ENCODE measurements at regions of chr9 and their contacts with region 1.

Region 1: GRCh38 chr9:68999393-69000105 is 14.4 kb downstream of the PRKACG start:
- DNase-seq: peak; percentile 76
- CTCF ChIP-seq: peak; percentile 73

Region 2: DNA sequence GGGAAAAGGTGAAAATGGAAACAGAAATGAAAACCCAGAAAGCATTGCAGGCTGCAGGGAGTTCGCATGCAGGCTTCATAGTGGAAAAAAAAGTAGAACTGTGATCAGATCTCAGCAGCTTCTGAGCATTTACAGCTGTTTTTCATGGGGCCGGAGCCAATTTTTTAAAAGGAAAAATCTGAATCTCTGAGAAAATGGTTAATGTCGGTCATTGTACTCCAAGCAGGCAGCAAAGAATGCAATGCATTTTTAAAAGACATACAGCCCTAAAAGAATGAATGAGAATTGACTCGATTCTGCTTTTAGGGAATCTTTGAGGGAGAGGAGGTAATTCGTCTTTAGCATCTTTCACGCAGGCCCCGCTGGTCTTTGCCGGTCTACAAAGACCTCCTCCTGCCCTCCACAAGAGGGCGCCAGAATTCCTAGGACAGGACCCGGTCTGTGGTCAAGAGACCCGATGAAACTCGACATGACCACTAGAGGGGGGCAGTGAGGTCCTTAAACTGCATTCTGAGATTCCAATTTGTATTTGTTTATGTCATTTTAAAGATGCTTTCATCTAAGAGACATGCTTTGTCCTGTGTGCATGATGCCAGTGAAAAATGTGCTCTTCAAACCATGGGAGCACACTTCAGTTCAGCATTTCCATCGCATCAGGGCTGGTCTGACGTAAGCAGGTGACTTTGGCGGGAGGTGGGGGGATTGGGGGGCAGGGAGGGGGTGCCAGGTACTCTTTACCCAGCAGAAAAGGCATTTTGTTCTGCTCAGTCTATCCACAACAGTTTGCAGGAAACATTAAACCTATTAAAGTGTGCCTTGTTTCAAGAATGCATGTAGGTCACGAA is 415.1 kb before region 1 on chr9:
- CTCF ChIA-PET with region 1: interaction called, 21 read pairs
- POLR2A ChIA-PET with region 1: no interaction called
- DNase-seq: peak; percentile 86
- CTCF ChIP-seq: peak; percentile 99

Region 3: DNA sequence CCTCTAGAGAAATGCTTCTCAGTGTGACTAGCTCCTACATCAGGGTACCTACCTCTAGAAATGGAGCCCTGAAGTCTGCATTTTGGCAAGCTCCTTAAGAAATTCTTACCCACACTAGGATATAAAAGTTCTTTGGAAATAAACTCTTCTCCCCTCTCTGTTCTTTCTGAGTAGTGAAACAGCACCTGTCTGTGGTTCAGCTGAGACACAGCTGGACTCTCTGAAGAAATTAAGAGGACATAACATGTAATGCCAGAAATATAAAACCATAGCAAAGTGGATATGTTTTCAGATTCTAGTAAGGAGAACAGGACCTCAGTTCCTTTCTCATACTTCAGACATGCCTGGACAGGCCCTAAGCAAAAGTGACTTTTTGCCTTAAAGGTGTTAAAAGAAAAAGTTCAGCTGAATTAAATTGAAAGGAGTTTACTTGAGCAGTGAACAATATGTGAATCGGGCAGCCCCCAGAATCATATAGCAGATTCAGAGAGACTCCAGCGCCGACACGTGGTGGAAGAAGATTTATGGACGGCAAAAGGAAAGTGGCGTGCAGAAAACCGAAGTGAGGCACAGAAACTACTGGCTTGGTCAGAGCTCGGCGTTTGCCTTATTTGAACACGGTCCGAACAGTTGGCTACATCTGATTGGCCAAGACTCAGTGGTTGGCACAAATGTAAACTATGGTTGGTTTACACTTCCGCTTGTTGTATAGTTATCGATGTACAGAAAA is 50.1 kb before region 1 on chr9:
- CTCF ChIA-PET with region 1: interaction called, 18 read pairs
- POLR2A ChIA-PET with region 1: no interaction called
- DNase-seq: no peak
- CTCF ChIP-seq: peak; percentile 58

Region 4: GRCh38 chr9:68966496-68966944 is 33.0 kb before region 1 on chr9:
- CTCF ChIA-PET with region 1: interaction called, 18 read pairs
- POLR2A ChIA-PET with region 1: no interaction called
- DNase-seq: peak; percentile 59
- CTCF ChIP-seq: no peak

Region 5: DNA sequence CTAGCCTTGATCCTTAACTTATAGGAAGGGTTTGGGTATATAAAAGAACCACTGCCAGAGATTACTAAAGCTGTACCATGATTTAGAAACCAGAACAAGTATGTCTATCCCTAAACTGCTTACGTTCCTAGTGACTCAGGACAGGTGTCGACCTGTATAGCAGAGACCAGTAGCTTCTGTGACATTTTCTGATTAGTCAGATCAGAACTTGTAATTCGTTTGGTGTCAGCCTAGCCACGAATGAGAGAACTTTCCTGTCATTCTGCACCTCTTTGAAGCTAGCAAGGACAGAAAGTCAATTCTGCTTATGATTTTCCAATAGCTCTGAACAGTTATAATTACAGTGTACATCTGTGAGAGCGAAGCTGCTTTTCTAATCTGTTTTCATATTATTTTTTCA is 25.1 kb before region 1 on chr9:
- CTCF ChIA-PET with region 1: interaction called, 34 read pairs
- POLR2A ChIA-PET with region 1: no interaction called
- DNase-seq: peak; percentile 66
- CTCF ChIP-seq: no peak

Region 6: DNA sequence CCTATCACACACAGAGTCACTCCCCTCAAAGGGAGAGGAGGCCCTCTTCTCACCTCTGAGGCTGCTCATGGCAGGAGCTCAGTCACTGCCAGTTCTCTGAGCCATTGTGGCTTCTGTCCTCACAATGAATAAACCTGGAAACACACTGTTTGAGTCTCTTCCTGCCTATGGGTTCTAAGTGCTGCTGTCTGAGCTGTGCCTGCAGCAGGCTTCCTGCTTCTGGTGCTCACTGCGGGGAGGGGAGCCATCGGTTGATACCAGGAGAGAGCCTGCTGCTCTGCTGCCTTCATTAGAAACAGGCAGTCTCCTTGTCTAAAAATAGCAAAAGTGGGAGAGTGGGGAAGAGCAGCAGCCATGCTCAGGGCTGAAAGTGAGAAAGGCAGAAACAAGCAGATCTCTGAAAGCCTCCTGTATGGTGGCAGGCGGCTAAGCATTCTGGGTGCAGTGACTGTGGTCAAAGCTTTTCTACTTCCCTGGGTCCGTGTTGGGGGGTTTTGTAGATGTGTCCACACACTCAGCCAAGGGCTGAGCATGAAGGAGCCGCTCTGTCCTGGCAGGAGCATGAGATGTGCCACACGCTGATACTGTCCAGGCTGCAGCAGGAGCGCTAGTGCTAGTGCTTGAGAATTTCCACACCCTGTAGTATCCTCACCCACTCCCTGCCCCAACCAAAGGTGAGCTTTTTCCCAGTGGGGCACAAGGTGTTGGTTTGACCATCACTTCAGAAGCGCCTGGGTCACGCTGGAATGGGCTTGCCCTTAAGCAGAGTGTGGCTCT is 19.8 kb before region 1 on chr9:
- CTCF ChIA-PET with region 1: interaction called, 34 read pairs
- POLR2A ChIA-PET with region 1: no interaction called
- DNase-seq: no peak
- CTCF ChIP-seq: no peak

Region 7: GRCh38 chr9:69012696-69013381 is 13.3 kb after region 1 on chr9:
- CTCF ChIA-PET with region 1: interaction called, 28 read pairs
- POLR2A ChIA-PET with region 1: no interaction called
- DNase-seq: peak; percentile 31
- CTCF ChIP-seq: no peak

Region 8: GRCh38 chr9:69145144-69145715 is 145.7 kb after region 1 on chr9:
- CTCF ChIA-PET with region 1: no interaction called
- POLR2A ChIA-PET with region 1: no interaction called
- DNase-seq: no peak
- CTCF ChIP-seq: no peak

Measured in GM10248 (cell line).